BJ (cell line): ENCODE measurements at regions of chr22 and their contacts with region 1.

Region 1: DNA sequence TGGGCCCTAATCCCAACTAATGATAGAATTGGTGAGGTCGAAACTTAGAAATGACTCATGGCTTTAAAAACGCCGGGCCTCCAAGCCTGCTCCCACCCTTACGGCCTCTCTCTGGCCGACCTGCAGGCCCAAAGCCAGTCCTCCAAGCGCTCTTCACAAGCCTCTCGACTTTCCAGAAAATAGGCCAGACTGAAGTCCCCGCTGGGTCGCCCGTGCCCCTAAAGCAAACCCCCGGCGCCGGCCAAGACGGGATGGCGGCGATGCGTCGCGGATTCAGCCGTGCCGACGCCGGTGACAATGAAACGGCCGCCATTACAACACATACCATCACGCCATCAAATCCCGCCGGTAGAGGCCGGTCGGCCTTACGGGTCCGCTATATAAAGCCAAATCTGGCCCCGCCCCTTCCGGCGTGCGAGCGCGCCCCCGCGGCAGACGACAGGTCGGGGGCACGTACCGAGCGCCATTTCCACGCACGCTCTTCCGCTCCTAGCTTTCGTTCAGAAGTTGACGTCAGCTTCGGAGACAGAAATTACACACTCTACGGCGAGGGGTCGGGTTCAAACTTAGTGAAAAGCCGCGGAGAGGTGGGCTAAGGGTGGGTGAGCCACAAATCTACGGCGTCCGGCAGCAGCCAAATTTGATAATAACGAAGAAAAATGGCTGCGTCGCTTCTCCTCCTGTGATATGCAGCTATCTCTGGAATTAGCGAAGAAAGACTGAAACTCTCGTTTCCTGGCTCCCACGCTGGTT is at the start of gene RPL3:
- DNase-seq: peak; percentile 89
- H3K4me3 ChIP-seq: peak within 1 kb of the TSS; percentile 87
- H3K27me3 ChIP-seq: no peaks in the 10 kb centered on the region
- CTCF ChIP-seq: peak; percentile 36; the same call in 1 of the 2 replicates
- polyA plus RNA-seq, gene RPL3: 3,985 and 4,772 TPM in 2 replicates

Region 2: DNA sequence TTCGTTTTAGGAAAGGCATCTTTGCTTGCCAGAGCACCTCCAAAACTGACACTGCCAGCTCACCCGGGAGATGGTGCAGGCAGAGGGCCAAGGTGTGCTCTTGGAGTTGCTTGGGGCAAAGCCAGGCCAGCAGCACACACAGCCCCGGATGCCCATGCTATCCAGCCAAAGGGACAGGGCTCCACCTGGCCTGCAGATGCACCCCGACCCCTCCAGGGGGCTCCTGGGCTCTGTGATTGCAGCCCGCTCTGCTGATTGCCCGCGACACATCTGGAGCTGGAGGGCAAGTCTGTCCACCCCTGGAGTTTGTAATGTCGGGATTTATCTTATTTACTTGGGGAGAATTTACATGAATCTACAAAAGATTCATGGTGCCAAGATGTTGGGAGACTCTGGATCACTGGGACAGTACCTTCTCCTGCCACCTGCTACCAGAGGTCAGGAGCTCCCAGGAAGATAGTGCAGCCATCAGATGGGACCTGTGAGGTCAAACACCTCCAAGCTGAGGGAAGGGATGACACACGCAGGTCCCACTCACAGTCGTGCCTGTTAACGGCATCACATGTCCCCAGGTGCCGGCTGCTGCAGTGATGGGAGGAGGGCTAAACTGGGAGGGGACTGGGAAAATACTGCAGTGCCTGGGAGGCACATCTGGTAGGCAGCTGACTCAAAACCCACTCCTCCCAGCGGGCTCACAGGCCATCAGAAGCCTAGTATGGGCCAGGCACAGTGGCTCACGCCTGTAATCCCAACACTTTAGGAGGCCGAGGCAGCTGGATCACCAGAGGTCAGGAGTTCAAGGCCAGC is 184.2 kb before region 1 on chr22:
- CTCF ChIA-PET with region 1: interaction called, 10 read pairs
- POLR2A ChIA-PET with region 1: no interaction called
- DNase-seq: no peak
- H3K4me3 ChIP-seq: no peak overlapping the region
- H3K27me3 ChIP-seq: no peaks in the 10 kb centered on the region
- CTCF ChIP-seq: peak; percentile 68

Region 3: DNA sequence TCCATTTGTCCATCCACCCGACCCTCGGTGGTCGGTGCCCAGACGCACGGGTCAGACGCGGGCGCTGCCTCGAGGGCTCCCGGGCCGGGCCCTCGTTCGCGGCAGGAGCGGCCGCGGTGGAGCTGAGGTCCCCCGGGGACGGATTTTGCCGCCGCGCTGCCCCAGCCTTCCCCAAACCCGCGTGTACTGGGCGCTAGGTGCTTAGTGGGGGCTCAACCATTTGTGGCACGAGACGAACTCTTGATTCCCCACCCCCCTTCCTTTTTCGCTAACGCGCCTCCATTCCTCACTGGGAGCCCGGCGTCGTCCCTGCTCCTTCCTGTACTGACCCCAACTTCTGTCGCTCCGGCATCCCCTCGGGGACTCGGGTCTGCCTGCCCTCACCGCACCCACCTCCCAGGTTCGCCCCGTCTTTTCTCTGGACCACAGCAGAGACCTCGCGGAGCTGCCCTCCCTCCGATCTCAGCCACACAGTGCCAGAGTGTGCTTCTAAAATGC is 166.2 kb before region 1 on chr22:
- CTCF ChIA-PET with region 1: interaction called, 11 read pairs
- POLR2A ChIA-PET with region 1: interaction called, 5 read pairs
- DNase-seq: no peak
- H3K4me3 ChIP-seq: peak overlapping the region; percentile 55
- H3K27me3 ChIP-seq: peaks cover 16% of the 10 kb centered on the region
- CTCF ChIP-seq: no peak

Region 4: GRCh38 chr22:39170825-39171622 is 148.4 kb before region 1 on chr22:
- CTCF ChIA-PET with region 1: interaction called, 223 read pairs
- POLR2A ChIA-PET with region 1: interaction called, 5 read pairs
- DNase-seq: no peak
- H3K4me3 ChIP-seq: no peak overlapping the region
- H3K27me3 ChIP-seq: peaks cover 2% of the 10 kb centered on the region; the same call in 1 of the 2 replicates
- CTCF ChIP-seq: peak; percentile 93

Region 5: DNA sequence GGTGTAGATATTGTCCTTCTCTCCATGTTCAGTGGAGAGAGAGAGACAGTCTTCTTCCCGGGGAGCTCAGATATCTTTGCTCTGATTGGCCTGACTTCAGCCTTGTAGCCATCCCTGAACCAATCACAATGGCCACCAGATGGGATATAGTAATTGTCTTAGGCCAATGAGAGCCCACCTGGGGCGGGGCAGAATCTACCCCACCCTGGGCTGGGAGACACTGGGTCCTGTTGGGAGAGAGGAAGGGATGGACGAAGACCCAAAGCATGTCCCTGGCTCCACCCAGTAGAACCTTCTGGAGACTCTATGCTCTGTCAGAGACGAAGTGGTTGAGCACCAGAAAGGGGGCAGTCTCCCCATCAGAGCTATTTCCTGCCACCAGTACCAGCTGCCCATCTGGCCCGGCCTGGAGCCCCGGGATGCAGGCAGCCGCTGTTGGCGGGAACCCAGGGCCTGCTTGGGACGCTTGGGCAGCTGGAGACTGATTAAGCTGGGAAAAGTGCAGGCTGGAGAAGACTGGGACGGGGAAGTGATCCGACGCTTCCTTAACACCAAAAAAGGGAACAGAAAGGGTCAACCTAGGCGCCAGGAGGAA is 135.4 kb before region 1 on chr22:
- CTCF ChIA-PET with region 1: interaction called, 27 read pairs
- POLR2A ChIA-PET with region 1: no interaction called
- DNase-seq: no peak
- H3K4me3 ChIP-seq: no peak overlapping the region
- H3K27me3 ChIP-seq: no peaks in the 10 kb centered on the region
- CTCF ChIP-seq: no peak

Region 6: GRCh38 chr22:39215426-39216120 is 103.9 kb before region 1 on chr22:
- CTCF ChIA-PET with region 1: no interaction called
- POLR2A ChIA-PET with region 1: no interaction called
- DNase-seq: no peak
- H3K4me3 ChIP-seq: no peak overlapping the region
- H3K27me3 ChIP-seq: no peaks in the 10 kb centered on the region
- CTCF ChIP-seq: peak; percentile 23

Region 7: GRCh38 chr22:39306581-39307361 is 12.7 kb before region 1 on chr22:
- CTCF ChIA-PET with region 1: interaction called, 19 read pairs
- POLR2A ChIA-PET with region 1: interaction called, 7 read pairs
- DNase-seq: no peak
- H3K4me3 ChIP-seq: no peak overlapping the region
- H3K27me3 ChIP-seq: no peaks in the 10 kb centered on the region
- CTCF ChIP-seq: peak; percentile 27; the same call in 1 of the 2 replicates

Region 8: DNA sequence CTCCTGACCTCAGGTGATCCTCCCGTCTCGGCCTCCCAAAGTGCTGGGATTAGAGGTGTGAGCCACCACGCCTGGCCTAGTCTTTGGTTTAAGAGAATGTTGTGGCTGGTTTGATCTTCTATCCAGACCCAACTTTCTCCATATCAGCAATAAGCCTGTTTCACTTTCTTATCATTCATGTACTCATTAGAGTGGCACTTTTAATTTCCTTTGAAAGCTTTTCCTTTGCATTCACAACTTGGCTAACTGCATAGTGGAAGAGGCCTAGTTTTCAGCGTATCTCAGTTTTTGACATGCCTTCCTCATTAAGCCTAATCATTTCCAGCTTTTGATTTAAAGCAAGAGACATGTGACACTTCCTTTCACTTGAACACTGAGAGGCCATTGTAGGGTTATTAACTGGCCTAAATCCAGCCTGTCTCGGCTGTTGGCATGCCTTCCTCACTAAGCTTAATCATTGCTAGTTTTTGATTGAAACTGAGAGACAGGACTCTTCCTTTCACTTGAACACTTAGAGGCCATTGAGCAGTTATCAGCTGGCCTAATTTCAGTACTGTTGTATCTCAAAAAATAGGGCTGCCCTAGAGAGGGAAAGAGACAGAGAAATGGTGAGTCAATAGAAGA is 13.1 kb after region 1 on chr22:
- CTCF ChIA-PET with region 1: interaction called, 24 read pairs
- POLR2A ChIA-PET with region 1: interaction called, 8 read pairs
- DNase-seq: no peak
- H3K4me3 ChIP-seq: no peak overlapping the region
- H3K27me3 ChIP-seq: no peaks in the 10 kb centered on the region
- CTCF ChIP-seq: no peak

Region 9: DNA sequence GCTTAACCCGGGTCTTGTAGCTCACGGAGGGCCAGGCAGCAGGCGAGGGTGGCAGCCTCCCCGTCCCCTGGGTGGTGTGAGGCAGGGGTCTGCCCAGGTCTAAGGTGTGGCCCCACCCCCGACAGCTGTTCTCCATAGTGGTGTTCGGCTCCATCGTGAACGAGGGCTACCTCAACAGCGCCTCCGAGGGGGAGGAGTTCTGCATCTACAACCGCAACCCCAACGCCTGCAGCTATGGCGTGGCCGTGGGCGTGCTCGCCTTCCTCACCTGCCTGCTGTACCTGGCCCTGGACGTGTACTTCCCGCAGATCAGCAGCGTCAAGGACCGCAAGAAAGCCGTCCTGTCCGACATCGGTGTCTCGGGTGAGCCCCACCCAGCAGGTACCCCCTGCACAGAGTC is 54.7 kb after region 1 on chr22:
- CTCF ChIA-PET with region 1: no interaction called
- POLR2A ChIA-PET with region 1: no interaction called
- DNase-seq: no peak
- H3K4me3 ChIP-seq: no peak overlapping the region
- H3K27me3 ChIP-seq: no peaks in the 10 kb centered on the region; the same call in 1 of the 2 replicates
- CTCF ChIP-seq: no peak